T-cell (primary cell): ENCODE measurements at regions of chr1 and their contacts with region 1.

Region 1: GRCh38 chr1:61077676-61078541 is 4.5 kb upstream of the NFIA start:
- DNase-seq: peak; percentile 73 to 98 (median 91)
- ATAC-seq: peak; percentile 72 to 76 (median 74)
- H3K4me3 ChIP-seq: peak overlapping the region; percentile 66 to 72
- H3K4me3 Mint-ChIP-seq: peak overlapping the region; percentile 82 to 98 (median 90)
- H3K27ac ChIP-seq: peak overlapping the region; percentile 91
- H3K27ac Mint-ChIP-seq: peak overlapping the region; percentile 97 to 99
- H3K4me1 ChIP-seq: peaks cover 33 to 40% of the 10 kb centered on the region in 2 experiments
- H3K4me1 Mint-ChIP-seq: peaks cover 47 to 53% (median 49%) of the 10 kb centered on the region in 3 donors
- H3K27me3 ChIP-seq: peaks cover 0 to 5% of the 10 kb centered on the region in 2 experiments
- H3K27me3 Mint-ChIP-seq: no peaks in the 10 kb centered on the region

Region 2: GRCh38 chr1:61049850-61050540 is 27.9 kb before region 1 on chr1:
- CTCF ChIA-PET with region 1: interaction called, 14 to 39 read pairs
- POLR2A ChIA-PET with region 1: interaction called, 7 to 20 read pairs
- DNase-seq: peak; percentile 59 to 92 (median 82)
- ATAC-seq: peak; percentile 79 to 85 (median 82)
- H3K4me3 ChIP-seq: peak overlapping the region; percentile 62 to 78
- H3K4me3 Mint-ChIP-seq: peak overlapping the region; percentile 59 to 81 (median 71)
- H3K27ac ChIP-seq: no peak overlapping the region
- H3K27ac Mint-ChIP-seq: no peak overlapping the region
- H3K4me1 ChIP-seq: peaks cover 14 to 36% of the 10 kb centered on the region in 2 experiments
- H3K4me1 Mint-ChIP-seq: peaks cover 24 to 30% (median 28%) of the 10 kb centered on the region in 3 donors
- H3K27me3 ChIP-seq: peaks cover 5 to 48% of the 10 kb centered on the region in 2 experiments
- H3K27me3 Mint-ChIP-seq: peaks cover 33 to 36% of the 10 kb centered on the region in 2 donors

Region 3: GRCh38 chr1:61055110-61055614 is 22.7 kb before region 1 on chr1:
- CTCF ChIA-PET with region 1: interaction called, 14 to 39 read pairs
- POLR2A ChIA-PET with region 1: interaction called, 7 to 20 read pairs
- DNase-seq: no peak
- ATAC-seq: no peak
- H3K4me3 ChIP-seq: no peak overlapping the region
- H3K4me3 Mint-ChIP-seq: peak overlapping the region in 1 of 3 donors; percentile 24
- H3K27ac ChIP-seq: no peak overlapping the region
- H3K27ac Mint-ChIP-seq: no peak overlapping the region
- H3K4me1 ChIP-seq: peaks cover 19 to 42% of the 10 kb centered on the region in 2 experiments
- H3K4me1 Mint-ChIP-seq: peaks cover 34 to 41% (median 38%) of the 10 kb centered on the region in 3 donors
- H3K27me3 ChIP-seq: peaks cover 11 to 49% of the 10 kb centered on the region in 2 experiments
- H3K27me3 Mint-ChIP-seq: peaks cover 41 to 55% of the 10 kb centered on the region in 2 donors